Mammary epithelial cell (primary cell): ENCODE measurements at regions of chr20 and their contacts with region 1.

Region 1: DNA sequence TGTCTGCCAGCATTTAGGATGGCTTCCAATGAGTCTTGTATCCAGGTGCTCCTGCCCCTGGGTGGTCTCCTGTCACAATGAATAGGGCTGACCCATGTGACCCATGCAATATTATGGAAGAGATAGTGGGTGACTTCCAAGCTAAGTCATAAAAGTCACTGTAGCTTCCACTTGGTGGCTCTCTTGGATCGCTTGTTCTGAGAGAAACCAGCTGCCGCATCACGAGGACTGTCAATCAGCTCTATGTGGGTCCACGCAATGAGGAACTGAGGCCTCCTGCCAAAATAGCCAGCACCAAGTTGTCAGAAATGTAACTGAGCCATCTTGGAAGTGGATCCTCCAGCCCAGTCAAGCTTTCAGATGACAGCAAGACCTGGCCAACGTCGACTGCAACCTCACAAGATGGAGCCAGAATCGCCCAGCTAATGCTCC is 14.9 kb upstream of the MATN4 start:
- DNase-seq: peak; percentile 51
- H3K4me3 ChIP-seq: no peak overlapping the region
- H3K27ac ChIP-seq: peak overlapping the region; percentile 1
- H3K4me1 ChIP-seq: no peaks in the 10 kb centered on the region
- H3K27me3 ChIP-seq: no peaks in the 10 kb centered on the region
- CTCF ChIP-seq: no peak

Region 2: DNA sequence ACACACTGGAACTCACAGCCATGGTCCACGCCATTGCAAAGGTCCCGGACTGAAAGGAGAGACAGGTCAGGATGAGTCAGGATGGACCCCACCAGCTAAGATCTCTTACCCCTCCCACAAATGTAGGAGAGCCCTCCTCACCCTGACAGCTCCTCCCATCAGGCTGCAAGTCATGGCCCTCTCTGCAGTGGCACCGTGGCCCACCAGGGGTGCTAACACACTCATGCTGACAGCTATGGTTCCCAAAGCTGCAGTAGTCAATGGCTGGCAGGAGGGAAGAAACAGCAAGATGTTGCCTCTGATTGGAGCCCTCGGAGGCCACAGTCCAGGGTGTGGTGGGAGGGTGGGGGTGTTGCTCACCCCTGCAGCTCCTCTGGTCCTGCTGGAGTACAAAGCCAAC is 22.0 kb before region 1 on chr20:
- CTCF ChIA-PET with region 1: interaction called, 15 read pairs
- dilution Hi-C with region 1: no loop called
- in situ Hi-C with region 1: no loop called
- intact Hi-C with region 1: no loop called
- DNase-seq: peak; percentile 13
- H3K4me3 ChIP-seq: no peak overlapping the region
- H3K27ac ChIP-seq: no peak overlapping the region
- H3K4me1 ChIP-seq: no peaks in the 10 kb centered on the region
- H3K27me3 ChIP-seq: no peaks in the 10 kb centered on the region
- CTCF ChIP-seq: peak; percentile 46 to 62

Region 3: DNA sequence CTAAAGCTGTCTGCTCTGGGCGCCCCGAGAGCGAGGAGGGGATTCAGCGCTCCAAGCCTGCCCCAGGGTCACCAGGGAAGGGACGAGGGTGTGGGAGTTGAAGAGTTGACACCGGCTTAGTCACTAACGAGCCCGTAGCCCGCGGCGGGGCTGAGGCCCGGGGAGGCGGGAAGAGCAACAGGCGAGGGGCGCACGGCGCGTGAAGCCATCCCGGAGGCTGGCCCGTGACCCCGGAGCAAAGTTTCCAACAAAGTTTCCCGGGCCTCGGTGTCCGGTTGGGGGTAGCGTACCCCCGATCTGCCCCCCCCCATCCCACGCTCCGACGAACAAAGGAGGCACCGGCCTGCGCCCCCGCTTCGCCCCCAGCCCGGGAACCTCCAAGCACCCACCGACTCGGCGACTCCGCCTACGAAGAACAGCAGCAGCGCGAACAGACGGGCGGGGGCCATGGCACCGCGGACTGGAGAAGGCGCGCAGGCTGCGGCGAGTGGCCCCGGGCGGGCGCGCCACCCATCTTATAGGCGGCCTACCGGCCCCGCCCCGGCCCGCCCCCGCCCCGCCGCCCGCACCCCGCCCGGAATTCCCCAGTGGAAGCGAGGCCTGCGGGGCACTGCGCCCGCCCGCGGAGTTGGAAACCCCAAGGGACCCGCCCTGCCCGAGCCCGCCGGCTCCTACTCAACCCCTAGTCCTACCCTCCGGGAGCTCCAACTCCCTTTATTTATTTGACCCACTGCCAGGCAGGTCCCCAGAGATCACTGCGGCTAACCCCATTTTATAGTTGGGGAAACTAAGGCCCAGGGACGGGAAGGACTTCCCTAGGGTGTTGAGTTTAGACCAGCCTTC is 25.2 kb after region 1 on chr20 and contains the start of gene SDC4:
- CTCF ChIA-PET with region 1: interaction called, 18 read pairs
- dilution Hi-C with region 1: no loop called
- in situ Hi-C with region 1: no loop called
- intact Hi-C with region 1: loop called (anchors 2 kb)
- DNase-seq: peak; percentile 84
- H3K4me3 ChIP-seq: peak within 1 kb of the TSS; percentile 75 to 87 (median 82)
- H3K27ac ChIP-seq: peak within 1 kb of the TSS; percentile 96
- H3K4me1 ChIP-seq: peaks cover 34% of the 10 kb centered on the region
- H3K27me3 ChIP-seq: no peaks in the 10 kb centered on the region
- CTCF ChIP-seq: no peak
- total RNA-seq, gene SDC4: 276 to 550 TPM

Region 4: GRCh38 chr20:45436732-45437391 is 113.9 kb after region 1 on chr20:
- CTCF ChIA-PET with region 1: interaction called, 17 read pairs
- dilution Hi-C with region 1: loop called (anchors 5 kb)
- in situ Hi-C with region 1: loop called in 1 of 2 experiments (anchors 5 kb)
- intact Hi-C with region 1: loop called (anchors 1 kb)
- DNase-seq: peak; percentile 70
- H3K4me3 ChIP-seq: peak overlapping the region; percentile 62 to 80 (median 72)
- H3K27ac ChIP-seq: no peak overlapping the region
- H3K4me1 ChIP-seq: no peaks in the 10 kb centered on the region
- H3K27me3 ChIP-seq: no peaks in the 10 kb centered on the region
- CTCF ChIP-seq: peak; percentile 88 to 98

Region 5: GRCh38 chr20:45450097-45450818 is 127.3 kb after region 1 on chr20:
- CTCF ChIA-PET with region 1: interaction called, 3 read pairs
- dilution Hi-C with region 1: no loop called
- in situ Hi-C with region 1: loop called in 1 of 2 experiments (anchors 5 kb)
- intact Hi-C with region 1: loop called (anchors 1 kb)
- DNase-seq: peak; percentile 27
- H3K4me3 ChIP-seq: no peak overlapping the region
- H3K27ac ChIP-seq: no peak overlapping the region
- H3K4me1 ChIP-seq: no peaks in the 10 kb centered on the region
- H3K27me3 ChIP-seq: no peaks in the 10 kb centered on the region
- CTCF ChIP-seq: peak; percentile 63 to 68